ENCODE measurements at regions of chr5 and their contacts with region 1.

Region 1: DNA sequence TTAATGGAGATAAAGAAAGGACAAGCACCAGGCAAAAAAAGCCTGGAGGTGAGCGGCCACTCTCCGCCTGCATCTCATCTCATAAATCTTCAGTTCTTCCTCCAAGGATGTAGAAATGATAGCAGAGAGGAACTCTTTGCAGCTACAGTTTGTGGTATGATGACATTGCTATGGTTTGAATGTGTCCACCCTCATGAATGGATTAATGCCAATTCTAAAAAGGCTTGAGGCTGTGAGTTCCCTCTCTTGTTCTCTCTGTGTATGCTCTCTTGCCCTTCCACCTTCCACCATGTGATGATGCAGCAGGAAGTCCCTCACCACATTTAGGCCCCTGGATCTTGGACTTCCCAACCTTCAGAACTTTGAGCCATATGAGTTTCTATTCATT is 126.4 kb downstream of the SPOCK1 start:
- DNase-seq: no peak
- ATAC-seq: no peak
- H3K4me3 ChIP-seq: no peak overlapping the region
- H3K27ac ChIP-seq: no peak overlapping the region
- H3K4me1 ChIP-seq: no peaks in the 10 kb centered on the region
- H3K27me3 ChIP-seq: peaks cover 57% of the 10 kb centered on the region
- CTCF ChIP-seq: no peak
- POLR2A ChIP-seq: no peak
- RAD21 ChIP-seq: no peak

Region 2: GRCh38 chr5:136853971-136854370 is 518.8 kb before region 1 on chr5:
- CTCF ChIA-PET with region 1: no interaction called
- POLR2A ChIA-PET with region 1: no interaction called
- RAD21 ChIA-PET with region 1: no interaction called
- intact Hi-C with region 1: no loop called
- DNase-seq: no peak
- ATAC-seq: no peak
- H3K4me3 ChIP-seq: no peak overlapping the region
- H3K27ac ChIP-seq: no peak overlapping the region
- H3K4me1 ChIP-seq: no peaks in the 10 kb centered on the region
- H3K27me3 ChIP-seq: peaks cover 14% of the 10 kb centered on the region; the same call in 1 of the 2 replicates
- CTCF ChIP-seq: no peak
- POLR2A ChIP-seq: no peak
- RAD21 ChIP-seq: no peak

Region 3: DNA sequence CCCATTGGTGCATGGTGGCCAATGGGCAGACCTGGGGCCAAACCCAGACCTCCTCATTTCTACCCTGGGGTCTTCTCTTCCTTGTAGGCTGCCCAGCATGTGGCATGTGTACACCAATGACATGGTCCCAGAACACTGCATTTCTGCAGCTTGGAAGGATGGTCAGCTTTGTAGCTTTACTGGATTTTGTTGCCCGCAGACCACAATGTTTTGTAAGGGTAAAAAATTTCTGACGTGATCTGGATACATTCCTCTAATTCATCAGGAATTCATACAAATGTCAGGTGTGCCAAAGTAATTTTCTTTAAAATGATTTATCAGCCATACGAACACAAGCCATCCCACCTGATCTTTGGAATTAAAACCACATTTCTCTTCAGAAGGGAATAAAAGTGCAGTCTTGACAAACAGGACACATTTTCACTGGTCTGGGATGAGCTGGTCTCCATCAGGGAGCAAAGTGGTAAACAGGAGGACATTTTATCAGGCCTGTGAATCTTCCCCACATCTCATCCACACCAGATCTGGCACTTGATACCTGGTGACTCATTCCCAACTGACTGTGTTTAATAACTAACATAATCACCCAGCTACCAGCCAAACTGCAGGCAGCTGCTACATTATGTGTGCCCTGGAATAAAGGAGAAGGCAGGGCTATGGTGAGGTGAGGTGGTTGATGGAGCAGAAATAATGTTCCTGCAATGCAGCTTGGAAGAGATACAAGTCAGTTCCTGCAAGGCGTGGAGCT is 22.4 kb after region 1 on chr5:
- CTCF ChIA-PET with region 1: no interaction called
- POLR2A ChIA-PET with region 1: no interaction called
- RAD21 ChIA-PET with region 1: no interaction called
- intact Hi-C with region 1: loop called (anchors 1 kb)
- DNase-seq: no peak
- ATAC-seq: no peak
- H3K4me3 ChIP-seq: no peak overlapping the region
- H3K27ac ChIP-seq: no peak overlapping the region
- H3K4me1 ChIP-seq: no peaks in the 10 kb centered on the region
- H3K27me3 ChIP-seq: peaks cover 12% of the 10 kb centered on the region
- CTCF ChIP-seq: no peak
- POLR2A ChIP-seq: no peak
- RAD21 ChIP-seq: no peak

Measured in HCT116 (cell line).